ENCODE measurements at regions of chr2 and their contacts with region 1.

Region 1: DNA sequence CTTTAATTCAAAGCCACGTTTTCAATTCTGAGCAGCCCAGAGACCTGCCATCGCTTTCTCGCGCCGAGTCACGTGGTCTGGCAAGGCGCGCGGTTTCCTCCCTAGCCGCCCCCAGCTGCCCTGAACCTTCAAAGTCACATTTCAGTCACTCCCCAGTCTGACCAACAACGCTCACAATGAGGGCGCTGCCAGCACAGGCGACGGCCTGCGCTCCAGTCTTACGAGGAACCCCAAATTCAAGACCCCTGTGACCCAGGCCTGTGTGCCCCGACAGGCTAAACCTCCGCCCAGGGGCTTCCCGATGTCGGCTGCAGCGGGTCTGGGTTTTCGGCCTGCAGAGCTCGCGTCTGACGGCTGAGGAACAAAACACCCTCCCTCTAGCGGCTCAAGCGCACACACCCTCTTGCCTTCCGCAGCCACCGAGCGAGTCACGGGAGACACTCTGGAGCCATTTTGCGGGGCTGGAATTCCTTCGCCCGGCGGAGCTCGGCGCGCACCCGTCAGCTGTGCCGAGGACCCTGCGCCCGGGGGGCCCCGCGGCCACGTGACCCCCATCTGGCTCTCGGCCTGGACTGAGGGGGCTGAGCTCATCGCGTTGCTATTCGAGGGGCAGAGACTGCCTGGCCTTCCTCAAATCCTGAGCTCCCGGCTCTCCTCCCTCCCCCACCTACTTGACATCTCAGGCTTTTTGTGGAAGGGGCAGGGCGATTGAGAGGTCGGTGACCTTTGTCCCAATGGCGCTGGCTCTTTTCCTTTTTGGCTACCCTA is 69.9 kb upstream of the ITGB6 start:
- DNase-seq: peak; percentile 43 to 68 (median 63)
- ATAC-seq: peak; percentile 89
- H3K4me3 ChIP-seq: peak overlapping the region; percentile 59
- H3K4me3 Mint-ChIP-seq: peak overlapping the region; percentile 75 to 95 (median 88)
- H3K27ac ChIP-seq: peak overlapping the region; percentile 66
- H3K27ac Mint-ChIP-seq: peak overlapping the region; percentile 42 to 97 (median 89)
- H3K4me1 ChIP-seq: peaks cover 5 to 7% of the 10 kb centered on the region in 2 donors
- H3K4me1 Mint-ChIP-seq: peaks cover 9 to 44% (median 32%) of the 10 kb centered on the region in 7 donors
- H3K27me3 ChIP-seq: no peaks in the 10 kb centered on the region
- H3K27me3 Mint-ChIP-seq: peaks cover 0 to 10% (median 0%) of the 10 kb centered on the region in 5 donors

Region 2: GRCh38 chr2:160224060-160224459 is 45.9 kb before region 1 on chr2:
- CTCF ChIA-PET with region 1: no interaction called
- POLR2A ChIA-PET with region 1: no interaction called
- intact Hi-C with region 1: loop called in 1 of 2 experiments (anchors 2 kb)
- DNase-seq: peak in 1 of 9 donors; percentile 34
- ATAC-seq: no peak
- H3K4me3 ChIP-seq: no peak overlapping the region
- H3K4me3 Mint-ChIP-seq: peak overlapping the region in 1 of 10 donors; percentile 50
- H3K27ac ChIP-seq: no peak overlapping the region
- H3K27ac Mint-ChIP-seq: peak overlapping the region in 3 of 9 donors; percentile 30 to 68 (median 67)
- H3K4me1 ChIP-seq: no peaks in the 10 kb centered on the region
- H3K4me1 Mint-ChIP-seq: peaks cover 10 to 43% (median 15%) of the 10 kb centered on the region in 7 donors
- H3K27me3 ChIP-seq: no peaks in the 10 kb centered on the region
- H3K27me3 Mint-ChIP-seq: no peaks in the 10 kb centered on the region

Region 3: GRCh38 chr2:160652236-160652635 is 382.2 kb after region 1 on chr2:
- CTCF ChIA-PET with region 1: no interaction called
- POLR2A ChIA-PET with region 1: no interaction called
- intact Hi-C with region 1: loop called in 1 of 2 experiments (anchors 5 kb)
- DNase-seq: peak; percentile 20 to 81 (median 72)
- ATAC-seq: peak; percentile 97
- H3K4me3 ChIP-seq: no peak overlapping the region
- H3K4me3 Mint-ChIP-seq: peak overlapping the region; percentile 13 to 79 (median 52)
- H3K27ac ChIP-seq: no peak overlapping the region
- H3K27ac Mint-ChIP-seq: peak overlapping the region in 8 of 9 donors; percentile 1 to 47 (median 8)
- H3K4me1 ChIP-seq: peaks cover 11 to 22% of the 10 kb centered on the region in 2 donors
- H3K4me1 Mint-ChIP-seq: peaks cover 23 to 45% (median 34%) of the 10 kb centered on the region in 7 donors
- H3K27me3 ChIP-seq: no peaks in the 10 kb centered on the region
- H3K27me3 Mint-ChIP-seq: peaks cover 3 to 10% (median 8%) of the 10 kb centered on the region in 5 donors